Posterior vena cava (tissue), 2 donors: ENCODE measurements at regions of chr4 and their contacts with region 1.

Region 1: GRCh38 chr4:126182786-126183185 is 868.0 kb downstream of the FAT4 start:
- DNase-seq: no peak

Region 2: DNA sequence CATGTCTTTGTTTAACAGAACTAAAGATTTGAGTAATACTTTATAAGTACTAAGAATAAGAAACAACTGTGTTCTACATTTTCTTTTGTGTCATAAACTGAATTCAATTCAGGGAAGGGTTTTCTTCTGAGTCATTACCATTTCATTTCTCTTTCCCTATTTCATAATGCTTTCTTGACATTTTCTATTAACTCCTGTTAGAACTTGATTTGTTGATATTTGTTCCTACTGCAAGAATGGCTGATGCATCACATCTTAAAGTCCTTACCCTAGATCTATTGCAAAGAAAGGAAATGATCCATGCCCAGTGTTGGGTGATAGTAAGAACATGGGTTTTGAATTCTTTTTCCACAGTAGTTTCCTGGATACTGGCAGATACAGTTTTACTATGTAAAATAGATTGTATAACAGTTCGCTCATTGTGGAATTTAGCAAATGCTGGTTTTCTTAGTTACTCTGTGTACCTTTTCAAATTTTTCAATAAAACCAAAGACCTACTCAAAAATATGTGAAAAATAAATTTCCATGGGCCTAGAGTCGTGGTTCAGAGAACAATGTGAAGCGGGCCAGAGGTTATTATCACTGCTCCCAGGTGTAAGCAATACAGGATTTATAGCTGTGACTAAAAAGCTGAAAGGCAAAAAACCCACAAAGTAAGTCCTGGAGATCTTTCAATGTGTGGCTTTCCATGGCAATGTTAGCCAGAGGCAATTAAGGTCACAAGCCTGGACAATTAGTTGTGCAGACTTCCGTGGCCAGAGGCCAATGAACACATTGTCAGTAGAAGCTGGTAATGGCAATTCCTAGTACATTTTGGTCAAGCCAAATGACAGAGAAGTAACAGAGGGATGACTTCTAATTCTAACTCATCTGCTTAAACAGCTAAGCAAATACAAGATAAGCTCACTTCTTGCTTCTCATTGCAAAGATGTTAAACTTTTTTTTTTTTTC is 995.3 kb before region 1 on chr4:
- intact Hi-C with region 1: no loop called
- DNase-seq: no peak

Region 3: GRCh38 chr4:126599746-126600145 is 417.0 kb after region 1 on chr4:
- intact Hi-C with region 1: loop called in 1 of 2 experiments (anchors 5 kb)
- DNase-seq: no peak

Region 4: DNA sequence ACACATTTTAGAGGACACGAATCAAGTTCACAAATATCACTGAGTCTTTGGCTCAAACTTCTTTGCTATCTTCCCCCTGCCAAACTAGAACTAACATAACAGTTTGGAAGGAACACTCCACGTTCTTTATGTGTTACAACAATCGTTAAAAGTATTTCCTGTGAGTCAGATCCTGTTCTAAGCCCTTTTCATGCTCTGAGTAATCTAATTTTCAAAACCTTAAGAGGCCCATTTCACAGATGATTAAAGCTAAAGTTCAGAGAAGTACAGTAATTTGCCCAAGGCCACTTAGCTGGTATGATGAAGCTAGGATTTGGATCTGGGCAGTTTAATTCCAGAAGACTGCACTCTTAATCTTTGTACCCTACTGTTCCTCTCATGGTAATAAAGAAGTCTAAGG is 595.6 kb after region 1 on chr4:
- intact Hi-C with region 1: no loop called
- DNase-seq: no peak